ENCODE measurements at regions of chr2 and their contacts with region 1.

Region 1: GRCh38 chr2:106104332-106105062 is 89.6 kb downstream of the UXS1 start:
- DNase-seq: no peak
- ATAC-seq: peak; percentile 62 to 64

Region 2: DNA sequence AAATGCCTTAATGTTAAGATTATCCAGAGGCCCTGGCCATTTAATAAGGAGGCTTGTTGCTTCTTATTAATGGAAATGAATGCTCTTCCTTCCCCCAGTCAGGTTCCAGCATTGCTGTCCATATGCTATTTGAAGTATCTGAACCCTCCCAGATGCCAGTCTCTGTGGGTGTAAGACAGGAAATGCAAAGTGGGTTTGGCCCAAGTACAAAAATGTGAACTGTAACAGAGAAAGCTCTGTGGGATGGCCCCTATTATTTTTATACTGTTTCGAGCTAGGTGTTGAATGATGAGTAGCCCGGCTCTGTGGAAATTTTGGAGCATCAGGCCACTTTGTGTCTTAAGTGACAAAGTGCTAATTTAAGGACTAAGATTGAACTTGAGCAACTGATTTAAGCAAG is 51.4 kb before region 1 on chr2:
- intact Hi-C with region 1: no loop called
- DNase-seq: no peak
- ATAC-seq: peak; percentile 61 to 72

Region 3: GRCh38 chr2:106197878-106198277 is 93.4 kb after region 1 on chr2:
- intact Hi-C with region 1: no loop called
- DNase-seq: no peak
- ATAC-seq: no peak

Region 4: GRCh38 chr2:106366204-106366885 is 261.8 kb after region 1 on chr2:
- intact Hi-C with region 1: no loop called
- DNase-seq: no peak
- ATAC-seq: no peak

Region 5: GRCh38 chr2:106542811-106543259 is 438.3 kb after region 1 on chr2:
- intact Hi-C with region 1: loop called in 1 of 2 experiments (anchors 10 kb)
- DNase-seq: peak; percentile 71
- ATAC-seq: peak; percentile 71 to 84

Region 6: GRCh38 chr2:106582148-106583143 is 477.9 kb after region 1 on chr2:
- intact Hi-C with region 1: loop called (anchors 5 to 10 kb)
- DNase-seq: peak; percentile 74
- ATAC-seq: peak; percentile 90 to 97

Measured in left cardiac atrium (tissue), 4 donors.